ENCODE measurements at regions of chr2 and their contacts with region 1.

Region 1: DNA sequence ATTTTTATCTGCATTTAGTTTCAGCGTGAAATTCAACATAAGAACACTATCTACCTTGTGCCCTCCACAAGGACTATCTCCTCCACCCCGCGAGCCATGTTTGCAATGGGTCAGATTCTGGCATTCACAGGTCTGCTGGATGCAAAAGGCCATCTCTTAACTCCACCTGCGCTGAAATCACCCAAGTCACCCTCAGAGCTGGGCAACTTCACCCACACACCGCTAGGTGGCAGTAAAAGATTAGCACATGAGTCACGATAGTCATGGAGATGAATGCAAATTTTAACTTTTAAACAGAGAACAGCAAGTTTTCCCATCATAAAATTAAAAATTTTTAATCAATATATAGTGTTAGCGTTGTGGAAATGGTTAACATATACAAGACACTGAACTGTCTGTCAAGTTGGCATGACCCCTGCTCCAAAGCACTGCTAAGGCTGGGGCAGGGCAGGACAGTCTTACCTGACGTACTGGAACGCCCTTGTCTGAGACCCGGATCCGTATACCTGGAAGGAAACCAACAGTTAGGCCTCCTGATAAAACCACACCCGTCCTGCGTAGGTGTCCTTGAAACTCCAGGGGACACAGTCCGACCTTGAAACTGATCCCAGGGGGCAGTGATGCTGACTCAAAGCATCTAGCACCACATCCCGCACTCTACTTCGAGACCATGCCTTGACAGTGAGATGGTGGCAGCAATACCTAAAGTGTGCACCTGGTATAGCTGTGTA is 89.6 kb downstream of the UXS1 start:
- DNase-seq: peak in 1 of 2 experiments; percentile 54
- H3K4me3 ChIP-seq: no peak overlapping the region
- H3K27ac ChIP-seq: no peak overlapping the region
- H3K4me1 ChIP-seq: no peaks in the 10 kb centered on the region
- H3K27me3 ChIP-seq: no peaks in the 10 kb centered on the region
- CTCF ChIP-seq: peak; percentile 99

Region 2: DNA sequence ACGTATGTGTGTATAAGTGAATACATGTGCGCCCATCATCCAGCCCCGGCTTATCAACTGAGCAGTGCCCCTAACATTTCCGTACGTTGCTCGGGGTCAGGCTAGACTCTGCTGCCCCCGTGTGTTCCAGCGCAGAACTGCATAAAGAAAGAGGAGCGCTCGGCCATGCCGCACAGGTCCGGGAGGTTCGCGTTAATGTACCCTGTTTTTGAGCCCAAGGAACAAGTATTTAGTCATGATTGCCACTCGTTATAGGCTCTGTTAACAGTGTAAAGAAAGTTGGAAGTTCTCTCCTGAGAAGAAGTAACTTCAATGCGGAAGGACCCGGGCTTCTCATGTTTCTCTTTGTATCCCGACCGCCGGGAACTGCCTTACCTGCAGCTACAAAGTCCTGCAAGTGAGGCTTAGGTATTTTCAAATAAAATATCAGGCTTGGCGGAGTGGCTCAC is 438.3 kb after region 1 on chr2:
- CTCF ChIA-PET with region 1: no interaction called
- POLR2A ChIA-PET with region 1: no interaction called
- intact Hi-C with region 1: loop called (anchors 1 kb)
- DNase-seq: peak; percentile 52
- H3K4me3 ChIP-seq: peak overlapping the region; percentile 32; the same call in 1 of the 2 replicates
- H3K27ac ChIP-seq: no peak overlapping the region
- H3K4me1 ChIP-seq: no peaks in the 10 kb centered on the region
- H3K27me3 ChIP-seq: peaks cover 78% of the 10 kb centered on the region
- CTCF ChIP-seq: peak; percentile 95

Region 3: DNA sequence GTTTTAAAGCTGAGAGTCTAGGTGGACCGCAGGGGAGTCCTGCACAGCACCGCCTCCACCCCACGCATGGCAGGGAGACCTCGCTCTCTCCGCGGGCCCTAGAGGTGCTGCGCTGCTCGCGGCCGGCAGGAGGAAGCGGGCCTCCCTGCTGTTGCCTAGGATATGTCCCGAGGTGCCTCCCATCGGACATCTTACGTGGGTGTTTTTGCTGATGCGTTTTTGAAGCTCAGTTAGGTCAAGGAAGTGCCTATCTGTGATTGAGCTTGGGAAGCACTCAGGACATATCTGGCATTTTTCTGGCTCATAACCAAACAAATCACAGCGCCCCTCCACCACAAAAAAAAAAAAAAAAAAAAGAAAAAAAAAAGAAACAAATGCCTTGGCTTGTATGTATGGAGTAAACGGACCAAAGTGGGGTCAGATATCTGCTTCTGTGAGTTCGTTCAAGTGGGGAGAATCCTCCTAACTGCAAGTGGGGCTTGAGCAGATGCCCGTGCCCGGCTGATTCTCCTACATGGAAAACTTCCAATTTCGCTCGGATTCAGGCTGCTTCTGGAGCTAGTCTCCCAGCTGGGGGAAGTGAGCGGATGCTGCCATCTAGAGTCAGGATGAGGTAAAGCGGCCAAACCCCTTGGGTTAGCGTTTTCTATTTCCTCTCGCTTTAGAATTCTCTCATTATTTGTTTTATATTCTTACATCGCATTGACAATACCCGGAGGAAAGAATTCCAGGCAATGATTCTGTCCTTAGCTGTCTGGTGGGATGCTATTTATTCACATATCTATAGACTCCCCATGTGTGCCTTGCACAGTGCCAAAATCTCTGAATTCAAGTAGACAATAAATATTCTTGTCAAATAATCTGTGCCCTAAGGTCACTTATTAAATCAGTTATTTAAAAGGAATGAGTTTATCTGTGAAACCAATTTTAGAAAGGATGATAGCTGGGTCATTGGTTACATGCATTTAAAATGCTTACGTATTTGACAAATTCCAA is 477.9 kb after region 1 on chr2:
- CTCF ChIA-PET with region 1: no interaction called
- POLR2A ChIA-PET with region 1: no interaction called
- intact Hi-C with region 1: loop called (anchors 5 kb)
- DNase-seq: peak; percentile 47 to 55
- H3K4me3 ChIP-seq: no peak overlapping the region
- H3K27ac ChIP-seq: no peak overlapping the region
- H3K4me1 ChIP-seq: no peaks in the 10 kb centered on the region
- H3K27me3 ChIP-seq: peaks cover 40% of the 10 kb centered on the region
- CTCF ChIP-seq: peak; percentile 82

Measured in PC-9 (cell line).